ENCODE measurements at regions of chr12 and their contacts with region 1.

Region 1: DNA sequence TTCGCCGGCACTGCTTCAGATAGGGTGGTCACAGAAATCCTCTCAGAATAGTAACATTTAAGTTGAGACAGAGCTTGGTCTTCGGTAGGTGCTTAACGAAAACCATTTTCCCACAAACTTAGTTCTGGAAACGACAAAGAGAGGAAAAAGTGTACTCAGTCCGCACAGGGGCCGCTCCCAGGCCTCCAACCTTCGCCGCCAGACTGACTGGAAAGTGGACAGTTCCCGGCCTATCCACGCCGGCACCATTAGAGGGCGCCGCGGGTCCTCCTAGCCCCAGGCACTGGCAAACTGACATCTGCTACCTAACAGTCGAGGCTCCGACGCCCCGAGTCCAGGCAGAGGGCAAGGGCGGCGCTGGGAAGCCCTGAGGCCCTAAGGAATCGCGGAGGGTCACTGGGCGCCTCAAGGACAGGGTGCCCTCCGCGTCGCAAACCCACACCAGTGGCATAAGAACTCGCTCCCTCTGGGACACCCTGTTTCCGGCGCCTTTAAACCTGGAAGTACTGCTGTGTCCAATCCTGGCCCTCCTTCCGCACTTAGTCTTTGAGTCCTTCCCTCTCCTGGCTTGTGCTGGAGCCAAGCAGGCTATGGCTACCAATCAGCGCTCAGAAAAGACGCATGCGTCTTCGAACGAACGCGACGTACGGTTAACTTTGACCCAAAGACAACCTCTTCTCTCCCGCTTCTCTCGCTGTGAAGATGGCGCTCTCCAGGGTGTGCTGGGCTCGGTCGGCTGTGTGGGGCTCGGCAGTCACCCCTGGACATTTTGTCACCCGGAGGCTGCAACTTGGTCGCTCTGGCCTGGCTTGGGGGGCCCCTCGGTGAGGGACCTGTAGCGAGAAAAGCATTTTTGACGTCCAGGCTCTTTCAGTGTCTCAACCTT is at the start of gene LETMD1:
- DNase-seq: peak; percentile 98
- H3K4me3 ChIP-seq: peak within 1 kb of the TSS; percentile 71 to 83 (median 77)
- H3K27ac ChIP-seq: peak within 1 kb of the TSS; percentile 89 to 95 (median 92)
- H3K4me1 ChIP-seq: peaks cover 0 to 26% (median 21%) of the 10 kb centered on the region in 4 donors
- H3K27me3 ChIP-seq: no peaks in the 10 kb centered on the region
- CTCF ChIP-seq: peak; percentile 80 to 89 (median 87)
- EP300 ChIP-seq: no peak
- POLR2A ChIP-seq: peak; percentile 50 to 56
- total RNA-seq, gene LETMD1: 59.5 to 87.2 (median 72.4) TPM

Region 2: DNA sequence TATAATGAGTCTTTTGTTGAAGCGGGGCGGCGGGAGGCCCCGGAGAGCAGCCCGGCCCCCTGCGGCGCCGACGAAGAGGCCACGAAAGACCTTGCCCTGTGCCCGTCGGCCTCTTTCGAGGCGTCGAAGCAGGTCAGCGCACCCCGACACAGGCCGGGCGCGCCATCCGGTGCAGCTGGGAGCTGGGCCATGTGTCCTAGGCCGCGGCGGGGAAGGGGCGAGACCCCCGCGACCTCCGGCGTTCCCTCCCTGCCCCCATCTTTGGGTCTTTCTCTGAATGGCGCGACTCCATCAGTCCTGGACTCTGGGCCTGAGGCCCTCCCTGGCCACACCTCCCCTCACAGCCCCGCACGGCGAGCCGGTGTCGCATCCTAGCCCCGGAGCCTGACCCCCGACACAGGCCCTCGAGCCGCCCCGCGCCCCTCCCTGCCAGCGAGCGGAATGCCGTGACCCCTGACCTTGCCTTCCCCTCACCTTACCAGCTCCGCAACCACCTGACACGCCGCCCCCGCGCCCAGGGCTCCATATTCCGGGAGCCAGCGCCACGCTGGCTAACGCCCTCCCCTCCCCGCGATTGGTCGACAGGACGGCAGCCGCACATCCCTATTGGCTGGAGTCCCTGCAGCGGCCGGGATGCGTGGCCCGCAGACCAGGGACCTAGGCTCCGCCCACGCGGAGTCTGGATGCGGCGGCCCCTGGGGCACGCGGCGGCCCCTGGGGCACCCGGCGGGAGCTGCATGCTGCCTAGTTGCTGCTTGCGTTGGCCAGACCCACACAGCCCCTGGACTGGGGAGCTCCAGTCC is 21.9 kb before region 1 on chr12 and contains the start of gene SLC11A2:
- intact Hi-C with region 1: loop called (anchors 2 kb)
- DNase-seq: peak; percentile 98
- H3K4me3 ChIP-seq: peak within 1 kb of the TSS; percentile 80 to 87 (median 82)
- H3K27ac ChIP-seq: peak within 1 kb of the TSS; percentile 88 to 95 (median 92)
- H3K4me1 ChIP-seq: peaks cover 0 to 39% (median 14%) of the 10 kb centered on the region in 4 donors
- H3K27me3 ChIP-seq: no peaks in the 10 kb centered on the region
- CTCF ChIP-seq: peak in 2 of 4 experiments; percentile 17
- EP300 ChIP-seq: no peak
- POLR2A ChIP-seq: peak; percentile 29 to 58
- total RNA-seq, gene SLC11A2: 25.0 to 44.6 (median 37.1) TPM

Region 3: GRCh38 chr12:51172515-51173431 is 124.9 kb after region 1 on chr12 and contains the start of gene TFCP2:
- intact Hi-C with region 1: loop called (anchors 2 kb)
- DNase-seq: peak; percentile 99
- H3K4me3 ChIP-seq: peak within 1 kb of the TSS; percentile 64 to 86 (median 75)
- H3K27ac ChIP-seq: peak within 1 kb of the TSS; percentile 93 to 98 (median 96)
- H3K4me1 ChIP-seq: peaks cover 0 to 27% (median 18%) of the 10 kb centered on the region in 4 donors
- H3K27me3 ChIP-seq: no peaks in the 10 kb centered on the region
- CTCF ChIP-seq: no peak
- EP300 ChIP-seq: peak in 1 of 4 donors; percentile 13
- POLR2A ChIP-seq: peak; percentile 43 to 62
- total RNA-seq, gene TFCP2: 11.9 to 17.8 (median 13.7) TPM

Region 4: GRCh38 chr12:51238510-51239334 is 190.8 kb after region 1 on chr12 and contains the start of gene DAZAP2:
- intact Hi-C with region 1: loop called (anchors 2 kb)
- DNase-seq: peak; percentile 98
- H3K4me3 ChIP-seq: peak within 1 kb of the TSS; percentile 96 to 100 (median 97)
- H3K27ac ChIP-seq: peak within 1 kb of the TSS; percentile 99 to 100 (median 100)
- H3K4me1 ChIP-seq: peaks cover 0 to 28% (median 22%) of the 10 kb centered on the region in 4 donors
- H3K27me3 ChIP-seq: no peaks in the 10 kb centered on the region
- CTCF ChIP-seq: peak in 2 of 4 experiments; percentile 28 to 39
- EP300 ChIP-seq: peak in 1 of 4 donors; percentile 36
- POLR2A ChIP-seq: peak; percentile 94
- total RNA-seq, gene DAZAP2: 107 to 265 (median 191) TPM

Measured in sigmoid colon (tissue), 7 donors.